Ovary (tissue), 10 donors: ENCODE measurements at regions of chr12 and their contacts with region 1.

Region 1: DNA sequence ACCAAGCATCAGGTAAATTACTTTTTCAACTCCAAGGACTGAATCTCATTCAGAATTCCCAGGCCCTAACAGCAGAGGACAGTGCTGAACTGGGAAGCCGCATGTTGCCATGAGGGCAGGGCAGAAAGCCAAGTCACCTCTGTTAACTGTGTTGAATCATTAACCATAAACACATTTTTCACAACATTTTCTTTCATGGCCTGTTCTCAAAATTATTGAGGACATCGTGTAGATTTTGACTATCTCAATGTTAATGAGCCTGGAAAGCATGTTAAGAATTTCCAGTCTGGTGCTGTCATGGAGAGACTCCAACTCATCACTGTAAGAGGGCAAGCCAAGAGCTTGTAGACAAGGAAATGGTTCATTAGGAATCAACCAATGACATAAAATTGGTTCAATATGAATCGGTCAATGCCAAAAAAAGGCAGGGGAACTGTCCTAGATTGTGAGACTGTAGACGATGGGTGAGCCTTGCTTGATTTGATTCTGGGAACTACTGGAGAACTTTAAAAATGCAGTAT is 33.7 kb downstream of the CPM start:
- DNase-seq: peak; percentile 54 to 82 (median 77)
- H3K4me3 ChIP-seq: no peak overlapping the region
- H3K27ac ChIP-seq: no peak overlapping the region
- H3K4me1 ChIP-seq: peaks cover 5% of the 10 kb centered on the region
- H3K27me3 ChIP-seq: no peaks in the 10 kb centered on the region
- CTCF ChIP-seq: peak in 2 of 3 donors; percentile 22 to 36
- EP300 ChIP-seq: no peak
- POLR2A ChIP-seq: no peak

Region 2: DNA sequence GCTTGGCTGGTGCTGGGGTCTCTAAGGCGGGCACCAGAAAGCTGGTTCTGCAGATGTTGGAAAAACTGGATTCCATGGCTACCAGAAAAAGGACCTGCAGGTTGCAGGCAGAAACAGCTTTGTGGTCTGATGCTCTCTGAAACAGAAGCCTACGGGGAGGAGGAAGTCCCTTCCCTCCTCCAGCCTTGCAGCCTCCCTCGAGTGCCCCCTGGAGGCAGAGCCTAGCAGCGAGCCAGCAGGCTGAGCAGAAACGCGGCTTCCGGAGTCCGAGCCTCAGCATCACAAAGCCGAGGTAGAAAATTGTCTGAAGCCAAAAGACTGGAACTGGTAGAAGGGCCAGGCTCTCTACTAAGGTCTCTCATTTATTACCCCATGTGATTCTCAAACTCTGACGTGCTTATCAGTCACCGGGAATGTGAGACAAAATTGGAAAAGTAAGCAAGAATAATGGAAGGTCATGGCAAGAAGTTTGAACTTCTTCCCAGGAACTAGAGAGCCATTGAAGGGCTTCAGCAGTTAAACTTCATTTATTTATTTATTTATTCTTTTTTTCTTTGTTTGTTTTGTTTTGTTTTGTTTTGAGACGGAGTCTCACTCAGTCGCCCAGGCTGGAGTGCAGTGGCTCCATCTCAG is 257.8 kb after region 1 on chr12:
- intact Hi-C with region 1: loop called in 1 of 4 experiments (anchors 10 kb)
- DNase-seq: peak; percentile 89 to 93 (median 90)
- H3K4me3 ChIP-seq: no peak overlapping the region
- H3K27ac ChIP-seq: peak overlapping the region in 1 of 2 donors; percentile 16
- H3K4me1 ChIP-seq: peaks cover 1% of the 10 kb centered on the region
- H3K27me3 ChIP-seq: no peaks in the 10 kb centered on the region
- CTCF ChIP-seq: peak; percentile 75 to 82 (median 79)
- EP300 ChIP-seq: no peak
- POLR2A ChIP-seq: no peak